ENCODE measurements at regions of chr1 and their contacts with region 1.

Region 1: GRCh38 chr1:185595835-185596667 is 138.1 kb upstream of the HMCN1 start:
- DNase-seq: peak; percentile 46
- H3K4me3 ChIP-seq: no peak overlapping the region; a peak in 1 of 4 replicates
- H3K27ac ChIP-seq: no peak overlapping the region
- H3K4me1 ChIP-seq: peaks cover 0 to 2% of the 10 kb centered on the region in 2 experiments; a peak in 3 of 4 replicates
- H3K27me3 ChIP-seq: no peaks in the 10 kb centered on the region; the same call in 1 of the 2 replicates
- CTCF ChIP-seq: peak; percentile 77
- EP300 ChIP-seq: no peak
- RAD21 ChIP-seq: peak; percentile 64

Region 2: DNA sequence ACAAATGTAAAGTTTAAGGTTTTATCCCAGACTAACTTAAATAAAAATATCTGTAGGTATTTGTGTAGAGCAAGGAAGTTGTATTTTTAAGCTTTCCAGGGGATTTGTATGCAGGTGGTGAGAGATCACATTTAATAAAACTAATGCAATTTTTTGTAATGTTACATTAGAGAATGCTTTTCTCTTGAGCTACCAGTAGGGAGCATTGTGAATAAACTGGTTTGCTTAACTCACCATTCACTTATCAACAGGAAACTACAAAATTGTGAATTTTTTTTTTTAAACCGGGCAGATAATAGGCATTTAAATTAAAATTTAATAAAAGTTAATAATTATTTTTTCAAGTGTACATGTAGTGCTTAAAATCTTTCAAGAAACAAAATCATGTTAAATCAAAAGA is 357.6 kb before region 1 on chr1:
- CTCF ChIA-PET with region 1: interaction called, 11 read pairs
- POLR2A ChIA-PET with region 1: no interaction called
- DNase-seq: no peak
- H3K4me3 ChIP-seq: no peak overlapping the region
- H3K27ac ChIP-seq: no peak overlapping the region
- H3K4me1 ChIP-seq: no peaks in the 10 kb centered on the region
- H3K27me3 ChIP-seq: no peaks in the 10 kb centered on the region
- CTCF ChIP-seq: peak; percentile 48
- EP300 ChIP-seq: no peak
- RAD21 ChIP-seq: peak; percentile 55

Region 3: DNA sequence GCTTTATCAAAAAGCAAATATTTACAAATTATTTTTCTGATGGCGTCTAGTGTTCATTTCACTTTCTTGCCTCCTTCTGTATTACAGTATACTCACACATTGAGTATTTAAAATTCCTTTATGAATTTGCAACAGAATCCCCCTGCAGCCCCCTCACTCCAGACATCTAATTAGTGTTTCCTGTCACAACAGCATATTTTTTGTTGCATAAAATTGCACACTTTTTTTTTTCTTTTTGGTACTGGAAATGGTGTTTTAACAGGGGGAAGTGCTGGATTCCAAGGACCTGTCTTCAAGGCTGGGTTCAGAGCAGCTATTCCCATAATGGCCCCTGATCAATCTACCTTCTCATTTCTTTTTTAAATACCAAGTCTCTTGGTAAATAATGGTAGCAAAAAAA is 46.1 kb before region 1 on chr1:
- CTCF ChIA-PET with region 1: interaction called, 10 read pairs
- POLR2A ChIA-PET with region 1: no interaction called
- DNase-seq: no peak
- H3K4me3 ChIP-seq: no peak overlapping the region
- H3K27ac ChIP-seq: no peak overlapping the region
- H3K4me1 ChIP-seq: no peaks in the 10 kb centered on the region
- H3K27me3 ChIP-seq: no peaks in the 10 kb centered on the region
- CTCF ChIP-seq: no peak
- EP300 ChIP-seq: no peak
- RAD21 ChIP-seq: no peak

Region 4: DNA sequence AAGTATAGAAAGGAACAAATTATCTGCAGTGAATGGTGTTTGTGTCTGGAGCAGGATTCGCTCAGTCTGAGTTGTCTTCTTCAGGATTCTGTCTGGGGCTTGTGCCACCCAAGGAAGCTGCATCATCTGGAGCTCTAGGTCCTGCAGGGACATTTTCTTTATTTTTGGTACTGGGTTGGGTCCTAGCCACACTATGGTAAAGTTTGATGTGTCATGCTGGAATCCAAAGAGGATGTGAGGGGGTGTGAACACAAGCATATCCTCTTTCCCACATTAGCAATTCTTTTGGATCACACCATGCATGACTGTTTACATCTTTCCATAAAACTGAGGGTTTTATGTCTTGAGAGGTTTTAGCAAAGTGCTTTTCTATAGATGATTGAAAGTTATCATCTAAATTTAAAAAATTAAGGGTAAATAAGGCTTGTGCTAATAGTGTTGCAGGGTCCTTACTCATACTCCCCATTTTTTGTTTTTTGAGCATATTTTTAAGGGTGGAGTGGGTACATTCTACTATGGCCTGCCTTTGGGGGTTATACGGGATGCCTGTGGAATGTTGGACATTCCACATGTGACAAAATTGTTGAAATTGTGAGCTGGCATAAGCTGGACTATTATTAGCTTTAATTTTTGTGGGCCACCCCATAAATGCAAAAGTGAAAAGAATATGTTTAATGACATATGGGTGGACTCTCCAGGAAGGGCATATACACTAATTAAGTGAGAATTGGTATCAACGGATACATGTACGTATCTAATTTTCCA is 13.9 kb before region 1 on chr1:
- CTCF ChIA-PET with region 1: interaction called, 17 read pairs
- POLR2A ChIA-PET with region 1: no interaction called
- DNase-seq: no peak
- H3K4me3 ChIP-seq: no peak overlapping the region
- H3K27ac ChIP-seq: no peak overlapping the region
- H3K4me1 ChIP-seq: no peaks in the 10 kb centered on the region
- H3K27me3 ChIP-seq: no peaks in the 10 kb centered on the region
- CTCF ChIP-seq: no peak
- EP300 ChIP-seq: no peak
- RAD21 ChIP-seq: no peak

Region 5: DNA sequence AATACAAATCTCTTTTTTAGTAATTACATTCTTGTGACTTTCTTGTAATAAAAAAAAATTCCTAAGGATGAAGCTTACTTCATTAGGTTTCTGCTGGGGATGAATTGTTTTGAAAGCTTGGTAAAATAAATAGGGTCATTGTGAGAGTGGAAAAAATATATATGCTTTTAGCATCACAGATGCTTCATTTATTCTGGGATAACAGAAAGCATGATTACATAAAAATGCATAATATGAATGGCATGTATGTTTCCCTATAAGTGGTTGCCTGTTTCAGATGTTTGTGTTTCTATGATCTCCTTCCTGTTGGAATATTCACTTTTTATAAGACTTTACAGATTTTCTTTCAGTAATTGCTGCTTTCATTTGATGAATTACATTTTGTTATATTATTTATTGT is 180.5 kb after region 1 on chr1:
- CTCF ChIA-PET with region 1: no interaction called
- POLR2A ChIA-PET with region 1: no interaction called
- DNase-seq: no peak
- H3K4me3 ChIP-seq: no peak overlapping the region
- H3K27ac ChIP-seq: peak overlapping the region; percentile 39 to 43; a peak in 2 of 4 replicates
- H3K4me1 ChIP-seq: peaks cover 0 to 20% of the 10 kb centered on the region in 2 experiments; a peak in 2 of 4 replicates
- H3K27me3 ChIP-seq: no peaks in the 10 kb centered on the region
- CTCF ChIP-seq: no peak
- EP300 ChIP-seq: no peak
- RAD21 ChIP-seq: no peak

Measured in SK-N-SH (cell line).